ENCODE measurements at regions of chr13 and their contacts with region 1.

Region 1: DNA sequence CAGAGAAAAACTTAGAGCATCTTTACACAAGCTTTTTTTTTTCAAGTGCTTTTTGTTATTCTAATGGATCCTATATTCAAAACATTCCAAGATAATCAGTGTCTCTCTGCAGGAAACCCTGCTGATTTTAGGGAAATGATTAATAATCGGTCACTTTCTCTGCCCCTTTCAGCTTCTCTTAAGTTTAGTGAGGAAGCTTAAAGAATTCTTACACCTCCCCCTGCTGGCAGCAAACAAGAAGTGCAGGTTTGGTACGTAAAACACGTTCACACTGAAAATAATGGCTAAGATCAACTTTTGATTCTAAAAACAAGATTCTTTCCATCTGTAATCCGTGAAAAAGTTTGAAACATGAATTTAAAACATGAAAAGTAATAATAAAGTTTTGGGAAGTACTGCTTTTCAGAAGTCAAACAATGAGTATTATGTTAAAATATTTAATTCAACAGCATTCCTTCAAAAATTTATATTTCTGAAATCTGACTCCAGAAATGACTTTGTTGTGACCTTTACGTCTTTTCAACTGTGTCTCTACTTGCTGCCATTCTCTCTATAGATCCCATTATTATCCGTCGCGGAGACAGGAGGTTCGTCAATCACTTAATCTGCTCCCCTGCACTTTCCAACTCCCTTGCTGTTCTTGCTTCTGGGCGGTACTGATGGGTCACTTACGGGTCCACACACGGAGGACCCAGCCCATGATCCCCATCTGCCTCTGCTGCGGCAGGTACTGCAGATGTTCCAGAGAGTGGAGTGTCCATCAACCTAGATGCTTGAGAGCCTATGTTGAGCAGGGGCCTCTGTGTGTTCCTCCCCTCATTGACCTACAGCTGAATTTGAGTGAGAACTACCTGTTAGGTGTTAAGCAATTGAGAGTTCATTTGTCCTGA is 203.1 kb upstream of the EDNRB start:
- DNase-seq: peak; percentile 22 to 43 (median 32)
- ATAC-seq: 0 out of 3 replicates have a peak, but pooled peaks have one; percentile 39
- H3K4me3 ChIP-seq: no peak overlapping the region
- H3K27ac ChIP-seq: no peak overlapping the region
- H3K4me1 ChIP-seq: no peaks in the 10 kb centered on the region
- H3K27me3 ChIP-seq: no peaks in the 10 kb centered on the region
- CTCF ChIP-seq: peak; percentile 23 to 64 (median 58); a peak in 5 of 6 replicates
- EP300 ChIP-seq: no peak
- POLR2A ChIP-seq: no peak
- RAD21 ChIP-seq: peak; percentile 38 to 63

Region 2: GRCh38 chr13:77599351-77599750 is 522.4 kb before region 1 on chr13:
- CTCF ChIA-PET with region 1: no interaction called
- POLR2A ChIA-PET with region 1: no interaction called
- in situ Hi-C with region 1: no loop called
- intact Hi-C with region 1: loop called (anchors 5 kb)
- DNase-seq: no peak
- ATAC-seq: no peak
- H3K4me3 ChIP-seq: no peak overlapping the region
- H3K27ac ChIP-seq: no peak overlapping the region
- H3K4me1 ChIP-seq: no peaks in the 10 kb centered on the region
- H3K27me3 ChIP-seq: no peaks in the 10 kb centered on the region
- CTCF ChIP-seq: no peak
- EP300 ChIP-seq: no peak
- POLR2A ChIP-seq: no peak
- RAD21 ChIP-seq: no peak

Region 3: GRCh38 chr13:77779552-77780272 is 342.0 kb before region 1 on chr13:
- CTCF ChIA-PET with region 1: interaction called, 7 read pairs
- POLR2A ChIA-PET with region 1: no interaction called
- in situ Hi-C with region 1: no loop called
- intact Hi-C with region 1: loop called (anchors 1 kb)
- DNase-seq: peak in 2 of 4 experiments; percentile 4 to 25
- ATAC-seq: no peak
- H3K4me3 ChIP-seq: no peak overlapping the region
- H3K27ac ChIP-seq: no peak overlapping the region
- H3K4me1 ChIP-seq: no peaks in the 10 kb centered on the region
- H3K27me3 ChIP-seq: no peaks in the 10 kb centered on the region
- CTCF ChIP-seq: peak in 2 of 3 experiments; percentile 7 to 49; a peak in 3 of 6 replicates
- EP300 ChIP-seq: no peak
- POLR2A ChIP-seq: no peak
- RAD21 ChIP-seq: peak in 1 of 2 experiments; percentile 42; a peak in 2 of 4 replicates

Region 4: GRCh38 chr13:78409172-78409571 is 287.5 kb after region 1 on chr13:
- CTCF ChIA-PET with region 1: no interaction called
- POLR2A ChIA-PET with region 1: no interaction called
- in situ Hi-C with region 1: no loop called
- intact Hi-C with region 1: no loop called
- DNase-seq: no peak
- ATAC-seq: no peak
- H3K4me3 ChIP-seq: no peak overlapping the region
- H3K27ac ChIP-seq: no peak overlapping the region
- H3K4me1 ChIP-seq: no peaks in the 10 kb centered on the region
- H3K27me3 ChIP-seq: no peaks in the 10 kb centered on the region
- CTCF ChIP-seq: no peak
- EP300 ChIP-seq: no peak
- POLR2A ChIP-seq: no peak
- RAD21 ChIP-seq: no peak

Region 5: GRCh38 chr13:79522583-79522982 is 1400.9 kb after region 1 on chr13:
- CTCF ChIA-PET with region 1: no interaction called
- POLR2A ChIA-PET with region 1: no interaction called
- in situ Hi-C with region 1: loop called (anchors 10 kb)
- intact Hi-C with region 1: no loop called
- DNase-seq: peak in 1 of 4 experiments; percentile 39
- ATAC-seq: no peak; the same call in 2 of the 3 replicates
- H3K4me3 ChIP-seq: no peak overlapping the region
- H3K27ac ChIP-seq: peak overlapping the region; percentile 53; the same call in 1 of the 3 replicates
- H3K4me1 ChIP-seq: peaks cover 0 to 12% of the 10 kb centered on the region in 2 experiments; a peak in 2 of 5 replicates
- H3K27me3 ChIP-seq: no peaks in the 10 kb centered on the region
- CTCF ChIP-seq: no peak
- EP300 ChIP-seq: no peak
- POLR2A ChIP-seq: no peak
- RAD21 ChIP-seq: no peak

Measured in K562 (cell line).